ENCODE measurements at regions of chr7 and their contacts with region 1.

Region 1: DNA sequence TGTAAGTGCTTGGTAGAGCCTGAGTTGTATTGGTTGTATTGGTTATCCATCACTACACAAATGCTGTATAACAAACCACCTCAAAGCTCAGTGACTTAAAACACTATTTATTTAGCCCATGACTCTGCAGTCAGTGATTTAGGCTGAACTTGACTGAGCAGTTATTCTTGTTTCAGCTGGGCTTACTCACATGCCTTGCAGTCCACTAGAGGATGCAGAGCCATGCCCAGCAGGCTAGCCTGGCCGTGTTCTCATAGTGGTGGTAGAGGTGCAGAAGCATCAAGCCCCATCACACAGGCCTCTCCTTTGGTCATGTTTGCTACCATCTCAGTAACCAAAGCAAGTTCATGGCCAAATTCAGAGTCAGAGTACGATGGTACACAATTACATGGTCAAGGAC is 43.9 kb downstream of the LUC7L2 start:
- DNase-seq: no peak
- H3K4me3 ChIP-seq: no peak overlapping the region
- H3K4me3 Mint-ChIP-seq: no peak overlapping the region
- H3K27ac ChIP-seq: no peak overlapping the region
- H3K27ac Mint-ChIP-seq: peak overlapping the region in 1 of 7 donors; percentile 17
- H3K4me1 ChIP-seq: no peaks in the 10 kb centered on the region
- H3K4me1 Mint-ChIP-seq: peaks cover 0 to 6% (median 2%) of the 10 kb centered on the region in 4 donors
- H3K27me3 ChIP-seq: no peaks in the 10 kb centered on the region
- H3K27me3 Mint-ChIP-seq: no peaks in the 10 kb centered on the region

Region 2: DNA sequence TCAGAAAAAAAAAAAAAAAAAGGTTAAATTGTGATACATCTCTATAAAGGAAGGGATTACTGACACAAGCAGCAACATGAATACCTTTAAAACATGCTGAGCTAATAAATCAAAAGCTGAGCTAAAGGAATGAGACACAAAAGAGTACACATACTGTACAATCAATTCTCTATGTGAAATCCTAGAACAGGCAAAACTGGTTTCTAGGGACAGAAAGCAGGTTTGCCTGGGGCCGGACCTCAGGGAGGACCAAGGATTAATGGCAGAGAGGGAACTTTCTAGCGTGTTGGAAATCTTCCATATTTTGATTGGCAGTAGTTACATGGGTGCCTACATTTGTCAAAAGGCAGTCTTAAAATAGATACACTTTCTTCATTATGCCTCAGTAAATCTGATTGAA is 27.4 kb after region 1 on chr7:
- CTCF ChIA-PET with region 1: interaction called, 12 read pairs
- POLR2A ChIA-PET with region 1: no interaction called
- intact Hi-C with region 1: no loop called
- DNase-seq: no peak
- H3K4me3 ChIP-seq: no peak overlapping the region
- H3K4me3 Mint-ChIP-seq: no peak overlapping the region
- H3K27ac ChIP-seq: no peak overlapping the region
- H3K27ac Mint-ChIP-seq: no peak overlapping the region
- H3K4me1 ChIP-seq: peaks cover 6% of the 10 kb centered on the region
- H3K4me1 Mint-ChIP-seq: peaks cover 8 to 12% (median 9%) of the 10 kb centered on the region in 4 donors
- H3K27me3 ChIP-seq: no peaks in the 10 kb centered on the region
- H3K27me3 Mint-ChIP-seq: no peaks in the 10 kb centered on the region

Measured in CD4-positive, alpha-beta memory T cell (primary cell).